ENCODE measurements at regions of chr10 and their contacts with region 1.

Region 1: GRCh38 chr10:30433730-30434272 is at the start of gene MAP3K8:
- DNase-seq: peak; percentile 97
- H3K4me3 ChIP-seq: peak within 1 kb of the TSS; percentile 70 to 78 (median 74)
- H3K27ac ChIP-seq: peak within 1 kb of the TSS; percentile 84
- H3K4me1 ChIP-seq: peaks cover 21% of the 10 kb centered on the region
- H3K27me3 ChIP-seq: no peaks in the 10 kb centered on the region
- CTCF ChIP-seq: no peak
- POLR2A ChIP-seq: peak; percentile 88
- total RNA-seq, gene MAP3K8: 8.1 and 10.6 TPM in 2 replicates

Region 2: DNA sequence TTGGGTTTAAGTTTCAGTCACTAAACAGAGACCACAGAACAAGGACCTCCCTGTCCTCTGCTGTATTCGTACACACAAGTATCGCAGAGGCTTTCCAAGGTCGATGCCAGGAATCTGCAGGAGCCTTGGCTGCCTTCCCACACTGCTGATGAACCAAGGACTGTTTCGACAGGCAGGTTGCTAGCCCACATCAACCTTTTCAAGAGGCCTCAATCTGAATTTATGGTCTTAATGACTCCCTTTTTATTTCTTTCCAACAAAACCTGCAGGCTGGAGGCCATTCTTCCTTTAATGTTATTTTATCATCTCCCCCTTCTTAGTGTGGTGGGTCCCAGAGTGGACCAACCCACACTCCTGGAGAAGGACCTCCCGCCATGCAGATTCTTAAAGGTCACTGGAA is 420.0 kb before region 1 on chr10:
- CTCF ChIA-PET with region 1: no interaction called
- POLR2A ChIA-PET with region 1: no interaction called
- dilution Hi-C with region 1: no loop called
- intact Hi-C with region 1: no loop called
- DNase-seq: no peak
- H3K4me3 ChIP-seq: no peak overlapping the region
- H3K27ac ChIP-seq: no peak overlapping the region
- H3K4me1 ChIP-seq: no peaks in the 10 kb centered on the region
- H3K27me3 ChIP-seq: no peaks in the 10 kb centered on the region
- CTCF ChIP-seq: no peak
- POLR2A ChIP-seq: no peak

Region 3: GRCh38 chr10:30413996-30414576 is 19.7 kb before region 1 on chr10:
- CTCF ChIA-PET with region 1: interaction called, 15 read pairs
- POLR2A ChIA-PET with region 1: interaction called, 3 read pairs
- dilution Hi-C with region 1: no loop called
- intact Hi-C with region 1: loop called (anchors 2 kb)
- DNase-seq: peak; percentile 69
- H3K4me3 ChIP-seq: no peak overlapping the region
- H3K27ac ChIP-seq: no peak overlapping the region
- H3K4me1 ChIP-seq: peaks cover 2% of the 10 kb centered on the region
- H3K27me3 ChIP-seq: no peaks in the 10 kb centered on the region
- CTCF ChIP-seq: peak; percentile 59 to 64
- POLR2A ChIP-seq: no peak

Region 4: GRCh38 chr10:30455816-30456215 is 22.0 kb after region 1 on chr10:
- CTCF ChIA-PET with region 1: interaction called, 3 read pairs
- POLR2A ChIA-PET with region 1: interaction called, 8 read pairs
- dilution Hi-C with region 1: no loop called
- intact Hi-C with region 1: loop called (anchors 2 kb)
- DNase-seq: no peak
- H3K4me3 ChIP-seq: no peak overlapping the region
- H3K27ac ChIP-seq: no peak overlapping the region
- H3K4me1 ChIP-seq: peaks cover 27% of the 10 kb centered on the region
- H3K27me3 ChIP-seq: no peaks in the 10 kb centered on the region
- CTCF ChIP-seq: no peak
- POLR2A ChIP-seq: no peak